Activated CD8-positive, alpha-beta T cell treated with anti-CD3 and anti-CD28 coated beads for 36 hours (primary cell): ENCODE measurements at regions of chr5 and their contacts with region 1.

Region 1: GRCh38 chr5:5421961-5422818 is at the start of gene ICE1:
- DNase-seq: peak; percentile 95
- ATAC-seq: peak; percentile 89
- H3K4me3 Mint-ChIP-seq: no peak within 1 kb of the TSS
- H3K27ac Mint-ChIP-seq: peak within 1 kb of the TSS; percentile 96
- H3K4me1 Mint-ChIP-seq: peaks cover 13% of the 10 kb centered on the region
- H3K27me3 Mint-ChIP-seq: no peaks in the 10 kb centered on the region
- CTCF ChIP-seq: no peak
- total RNA-seq, gene ICE1: 29.0 to 29.5 TPM

Region 2: DNA sequence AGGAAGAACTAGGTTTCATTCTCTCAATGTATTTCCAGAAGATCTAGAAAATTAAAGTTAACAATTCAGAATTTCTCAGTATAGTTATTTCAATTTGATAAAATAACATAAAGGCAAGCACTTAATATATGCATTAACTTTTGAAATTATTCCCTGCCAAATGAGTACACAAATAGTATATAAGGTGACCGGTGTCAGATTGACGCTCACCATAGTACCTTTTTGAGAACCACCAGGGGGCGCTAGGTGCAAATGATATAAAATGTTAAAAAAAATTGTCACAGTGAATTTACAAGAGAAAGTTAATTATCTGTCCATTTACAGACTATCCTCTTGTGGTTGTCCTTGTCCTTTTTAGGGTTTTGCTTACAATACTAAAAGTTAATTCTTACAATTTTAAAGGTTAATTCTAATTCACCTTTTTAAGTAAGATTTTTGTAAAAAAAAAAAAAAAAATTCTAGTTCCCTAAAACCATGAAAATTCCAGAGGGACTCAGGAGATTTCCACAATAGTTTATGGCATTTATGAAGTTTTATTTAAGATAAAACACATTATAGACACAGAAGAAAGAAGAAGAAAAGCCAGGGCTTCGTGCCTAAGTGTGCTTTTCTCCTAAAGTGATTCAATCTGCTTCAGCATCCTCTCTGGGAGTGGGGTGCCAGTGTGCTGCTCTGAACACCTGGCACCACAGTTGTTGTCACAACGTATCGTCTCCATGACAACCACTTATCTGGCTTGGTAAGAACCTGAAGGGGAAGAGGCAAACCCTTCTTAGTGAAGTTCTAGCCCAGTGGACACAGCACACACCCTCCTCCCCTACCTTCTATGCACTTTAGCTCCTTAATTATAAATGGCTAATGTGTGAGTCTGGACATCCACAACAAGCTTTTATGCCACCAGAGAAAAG is 280.3 kb before region 1 on chr5:
- CTCF ChIA-PET with region 1: interaction called, 14 read pairs
- POLR2A ChIA-PET with region 1: no interaction called
- intact Hi-C with region 1: loop called (anchors 2 kb)
- DNase-seq: peak; percentile 74
- ATAC-seq: no peak
- H3K4me3 Mint-ChIP-seq: no peak overlapping the region
- H3K27ac Mint-ChIP-seq: no peak overlapping the region
- H3K4me1 Mint-ChIP-seq: peaks cover 5% of the 10 kb centered on the region
- H3K27me3 Mint-ChIP-seq: peaks cover 21% of the 10 kb centered on the region
- CTCF ChIP-seq: peak; percentile 88

Region 3: DNA sequence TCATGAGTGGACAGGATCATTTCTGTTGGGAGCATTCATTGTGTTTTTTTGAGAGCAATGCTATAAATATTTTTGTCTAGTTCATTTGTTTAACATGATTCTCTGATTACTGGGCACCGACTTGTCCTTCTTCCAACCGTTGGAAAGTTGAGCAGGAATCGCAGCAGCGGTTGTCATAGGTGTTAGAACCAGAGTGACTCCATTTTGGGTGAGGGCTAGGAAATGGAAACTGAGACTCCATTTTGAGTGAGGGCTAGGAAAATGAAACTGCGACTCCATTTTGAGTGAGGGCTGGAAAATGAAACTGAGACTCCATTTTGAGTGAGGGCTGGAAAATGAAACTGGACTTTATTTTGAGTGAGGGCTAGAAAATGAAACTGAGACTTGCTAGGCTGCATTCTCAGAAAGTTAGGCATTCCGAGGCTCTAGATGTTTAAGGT is 100.9 kb after region 1 on chr5:
- CTCF ChIA-PET with region 1: no interaction called
- POLR2A ChIA-PET with region 1: interaction called, 3 read pairs
- intact Hi-C with region 1: loop called (anchors 5 kb)
- DNase-seq: peak; percentile 25
- ATAC-seq: peak; percentile 81
- H3K4me3 Mint-ChIP-seq: no peak overlapping the region
- H3K27ac Mint-ChIP-seq: peak overlapping the region; percentile 56
- H3K4me1 Mint-ChIP-seq: peaks cover 27% of the 10 kb centered on the region
- H3K27me3 Mint-ChIP-seq: no peaks in the 10 kb centered on the region
- CTCF ChIP-seq: no peak